Heart left ventricle (tissue), 16 donors: ENCODE measurements at regions of chr6 and their contacts with region 1.

Region 1: GRCh38 chr6:159693128-159693893 is at the start of gene SOD2:
- DNase-seq: peak; percentile 85 to 92 (median 89)
- ATAC-seq: peak; percentile 85 to 91 (median 88)
- H3K4me3 ChIP-seq: peak within 1 kb of the TSS; percentile 68 to 100 (median 92)
- H3K27ac ChIP-seq: peak within 1 kb of the TSS; percentile 91 to 100 (median 98)
- H3K4me1 ChIP-seq: peaks cover 0 to 53% (median 40%) of the 10 kb centered on the region in 12 donors
- H3K27me3 ChIP-seq: no peaks in the 10 kb centered on the region
- CTCF ChIP-seq: no peak
- POLR2A ChIP-seq: peak; percentile 45 to 87
- total RNA-seq, gene SOD2: 599 to 1,000 (median 741) TPM

Region 2: DNA sequence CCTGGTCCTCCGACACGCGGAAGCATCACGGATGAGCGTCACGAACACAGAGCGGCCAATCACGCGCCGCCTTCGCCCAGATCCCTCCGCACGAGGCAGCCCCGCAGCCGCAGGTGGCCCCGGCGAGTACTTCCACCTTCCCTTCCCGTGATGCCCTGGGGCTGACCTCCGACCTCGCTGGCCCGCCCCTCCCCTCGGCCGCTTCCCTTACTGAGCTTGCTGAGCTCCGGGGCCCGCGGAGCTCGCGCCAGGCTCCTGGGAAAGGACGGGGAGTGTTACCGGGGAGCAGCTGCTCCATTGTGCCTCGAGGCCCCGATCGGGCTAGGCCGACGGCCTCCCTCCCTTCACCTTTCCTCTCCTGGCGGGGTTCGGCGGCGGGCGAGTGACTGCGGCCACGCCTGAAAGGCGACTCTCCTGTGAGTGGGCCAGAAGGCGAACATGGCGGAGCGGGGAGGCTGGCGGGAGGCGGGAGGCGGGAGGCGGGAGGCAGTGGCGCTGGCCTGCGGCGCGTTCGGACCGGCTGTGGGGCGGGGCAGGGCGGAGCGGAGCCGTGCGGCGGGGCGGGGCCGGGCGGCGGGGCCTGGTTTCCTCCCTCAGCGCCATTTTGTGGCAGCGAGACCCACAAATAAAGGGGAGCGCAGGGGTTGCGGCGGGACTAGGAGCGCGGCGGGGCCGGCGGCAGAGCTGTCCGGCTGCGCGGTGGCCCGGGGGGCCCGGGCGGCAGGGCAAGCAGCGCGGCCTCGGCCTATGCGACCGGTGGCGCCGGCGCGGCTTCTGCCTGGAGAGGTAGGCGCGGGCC is 33.8 kb after region 1 on chr6 and contains the start of gene WTAP:
- intact Hi-C with region 1: loop called in 8 of 10 experiments (anchors 1 to 5 kb)
- DNase-seq: peak; percentile 95 to 97 (median 97)
- ATAC-seq: peak; percentile 96 to 98 (median 97)
- H3K4me3 ChIP-seq: peak within 1 kb of the TSS; percentile 64 to 98 (median 92)
- H3K27ac ChIP-seq: peak within 1 kb of the TSS; percentile 95 to 100 (median 99)
- H3K4me1 ChIP-seq: peaks cover 3 to 52% (median 42%) of the 10 kb centered on the region in 12 donors
- H3K27me3 ChIP-seq: no peaks in the 10 kb centered on the region
- CTCF ChIP-seq: no peak
- POLR2A ChIP-seq: peak in 1 of 2 donors; percentile 72
- total RNA-seq, gene WTAP: 39.0 to 70.2 (median 48.2) TPM

Region 3: GRCh38 chr6:159739341-159739740 is 46.0 kb after region 1 on chr6:
- intact Hi-C with region 1: no loop called
- DNase-seq: no peak
- ATAC-seq: no peak
- H3K4me3 ChIP-seq: no peak overlapping the region
- H3K27ac ChIP-seq: peak overlapping the region in 1 of 12 donors; percentile 23
- H3K4me1 ChIP-seq: peaks cover 0 to 51% (median 19%) of the 10 kb centered on the region in 12 donors
- H3K27me3 ChIP-seq: no peaks in the 10 kb centered on the region
- CTCF ChIP-seq: no peak
- POLR2A ChIP-seq: no peak

Region 4: DNA sequence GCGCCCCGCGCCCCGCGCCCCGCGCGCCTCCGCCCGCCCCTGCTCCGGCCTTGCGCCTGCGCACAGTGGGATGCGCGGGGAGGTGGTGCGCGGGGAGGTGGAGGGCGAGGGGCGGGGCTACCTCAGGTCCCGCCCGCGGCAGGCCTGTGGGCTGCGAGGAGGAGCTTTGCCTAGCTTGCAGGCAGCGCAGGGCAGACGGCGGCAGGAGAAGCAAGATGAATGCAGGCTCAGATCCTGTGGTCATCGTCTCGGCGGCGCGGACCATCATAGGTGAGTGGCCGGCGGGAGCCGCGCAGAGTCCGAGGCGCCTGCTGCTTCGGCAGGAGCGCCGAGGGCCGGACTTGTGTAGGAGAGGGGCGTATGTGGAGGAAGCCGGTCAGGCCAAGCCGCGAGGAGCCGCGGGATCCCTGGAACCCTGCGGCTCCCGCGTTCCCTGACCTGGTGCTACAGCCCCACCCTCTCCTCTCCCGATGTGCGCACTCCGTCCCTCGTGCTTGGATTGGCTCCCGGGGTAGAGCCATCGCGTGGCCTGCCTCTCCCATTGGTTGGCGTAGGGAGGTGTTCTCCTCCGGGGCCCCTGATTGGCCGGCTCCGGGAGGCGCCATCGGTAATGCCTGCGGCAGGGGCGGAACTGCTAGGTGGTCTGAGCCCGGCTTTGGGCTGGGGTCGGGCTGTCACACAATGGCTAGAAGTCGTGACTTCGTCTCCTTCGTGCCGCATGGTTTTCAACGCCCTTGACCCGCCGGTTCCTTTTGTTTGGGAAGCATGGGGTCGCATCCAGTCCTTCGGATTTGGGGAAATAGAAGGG is 68.8 kb after region 1 on chr6 and contains the start of gene ACAT2:
- intact Hi-C with region 1: loop called in 4 of 10 experiments (anchors 2 to 10 kb)
- DNase-seq: peak; percentile 95 to 98 (median 97)
- ATAC-seq: peak; percentile 98 to 99 (median 99)
- H3K4me3 ChIP-seq: peak within 1 kb of the TSS; percentile 77 to 100 (median 94)
- H3K27ac ChIP-seq: peak within 1 kb of the TSS; percentile 90 to 100 (median 98)
- H3K4me1 ChIP-seq: peaks cover 0 to 25% (median 12%) of the 10 kb centered on the region in 12 donors
- H3K27me3 ChIP-seq: no peaks in the 10 kb centered on the region
- CTCF ChIP-seq: peak in 2 of 12 donors; percentile 14 to 15
- POLR2A ChIP-seq: peak; percentile 11 to 53
- total RNA-seq, gene ACAT2: 1.3 to 9.9 (median 7.3) TPM

Region 5: GRCh38 chr6:159789377-159790148 is 96.3 kb after region 1 on chr6 and contains the start of gene TCP1:
- intact Hi-C with region 1: loop called (anchors 1 to 10 kb)
- DNase-seq: peak; percentile 99 to 100 (median 100)
- ATAC-seq: peak; percentile 92 to 95 (median 94)
- H3K4me3 ChIP-seq: peak within 1 kb of the TSS; percentile 80 to 100 (median 93)
- H3K27ac ChIP-seq: peak within 1 kb of the TSS; percentile 73 to 99 (median 96)
- H3K4me1 ChIP-seq: peaks cover 5 to 50% (median 35%) of the 10 kb centered on the region in 12 donors
- H3K27me3 ChIP-seq: no peaks in the 10 kb centered on the region
- CTCF ChIP-seq: no peak
- POLR2A ChIP-seq: peak in 1 of 2 donors; percentile 89
- total RNA-seq, gene TCP1: 107 to 184 (median 142) TPM

Region 6: GRCh38 chr6:159852877-159853276 is 159.6 kb after region 1 on chr6:
- intact Hi-C with region 1: loop called in 1 of 10 experiments (anchors 10 kb)
- DNase-seq: no peak
- ATAC-seq: no peak
- H3K4me3 ChIP-seq: no peak overlapping the region
- H3K27ac ChIP-seq: no peak overlapping the region
- H3K4me1 ChIP-seq: peaks cover 0 to 11% (median 0%) of the 10 kb centered on the region in 12 donors
- H3K27me3 ChIP-seq: no peaks in the 10 kb centered on the region
- CTCF ChIP-seq: peak in 4 of 12 donors; percentile 16 to 25 (median 20)
- POLR2A ChIP-seq: no peak

Region 7: GRCh38 chr6:159941286-159942113 is 248.2 kb after region 1 on chr6:
- intact Hi-C with region 1: loop called in 3 of 10 experiments (anchors 5 to 10 kb)
- DNase-seq: no peak
- ATAC-seq: peak in 3 of 4 donors; percentile 19 to 51 (median 47)
- H3K4me3 ChIP-seq: no peak overlapping the region
- H3K27ac ChIP-seq: no peak overlapping the region
- H3K4me1 ChIP-seq: peaks cover 0 to 26% (median 7%) of the 10 kb centered on the region in 12 donors
- H3K27me3 ChIP-seq: no peaks in the 10 kb centered on the region
- CTCF ChIP-seq: peak; percentile 26 to 65 (median 48)
- POLR2A ChIP-seq: no peak